AG04450 (cell line): ENCODE measurements at regions of chr20 and their contacts with region 1.

Region 1: DNA sequence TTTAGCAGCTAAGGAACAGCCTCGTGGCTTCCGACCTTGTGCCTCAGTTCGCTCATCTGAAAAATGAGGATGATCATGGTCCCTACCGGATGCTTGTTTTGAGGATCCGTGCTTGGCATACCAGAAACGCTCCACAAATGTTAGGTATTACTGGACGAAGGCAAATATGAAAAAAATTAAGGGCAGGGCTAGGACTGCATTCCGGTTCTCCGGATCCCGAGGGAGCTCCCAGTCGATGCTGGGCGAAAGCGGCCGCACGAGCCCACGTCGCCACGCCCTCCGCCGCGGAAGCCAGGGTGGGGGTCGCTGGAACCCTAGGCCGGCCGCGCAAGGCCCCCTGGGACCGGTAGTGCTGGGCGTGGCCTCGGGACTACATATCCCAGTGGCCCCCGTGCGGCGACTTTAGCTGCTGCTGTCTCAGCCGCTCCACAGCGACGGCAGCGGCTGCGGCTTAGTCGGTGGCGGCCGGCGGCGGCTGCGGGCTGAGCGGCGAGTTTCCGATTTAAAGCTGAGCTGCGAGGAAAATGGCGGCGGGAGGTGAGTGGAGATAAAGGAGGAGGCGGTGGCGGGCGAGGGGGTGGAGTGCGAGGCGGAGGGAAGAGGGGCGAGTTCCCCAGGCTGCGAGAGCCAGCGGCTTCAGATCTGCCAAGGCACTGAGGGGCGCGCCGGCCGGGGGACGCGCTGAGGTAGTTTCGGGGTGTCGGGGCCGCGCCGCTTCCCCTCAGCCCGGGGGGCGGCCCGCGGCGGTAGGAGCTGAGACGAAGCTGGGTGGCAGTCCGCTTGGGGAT is at the start of gene NCOA3:
- DNase-seq: peak; percentile 83
- H3K4me3 ChIP-seq: peak within 1 kb of the TSS; percentile 78
- H3K27ac ChIP-seq: peak within 1 kb of the TSS; percentile 55
- H3K27me3 ChIP-seq: no peaks in the 10 kb centered on the region
- CTCF ChIP-seq: peak; percentile 46
- polyA plus RNA-seq, gene NCOA3: 22.1 and 25.4 TPM in 2 replicates

Region 2: GRCh38 chr20:47120346-47120936 is 381.2 kb before region 1 on chr20:
- CTCF ChIA-PET with region 1: no interaction called
- POLR2A ChIA-PET with region 1: no interaction called
- DNase-seq: no peak
- H3K4me3 ChIP-seq: no peak overlapping the region
- H3K27ac ChIP-seq: no peak overlapping the region
- H3K27me3 ChIP-seq: no peaks in the 10 kb centered on the region
- CTCF ChIP-seq: no peak

Region 3: GRCh38 chr20:47453142-47453782 is 48.4 kb before region 1 on chr20:
- CTCF ChIA-PET with region 1: interaction called, 10 read pairs
- POLR2A ChIA-PET with region 1: interaction called, 3 read pairs
- DNase-seq: peak; percentile 68
- H3K4me3 ChIP-seq: no peak overlapping the region
- H3K27ac ChIP-seq: peak overlapping the region; percentile 39
- H3K27me3 ChIP-seq: no peaks in the 10 kb centered on the region
- CTCF ChIP-seq: no peak

Region 4: DNA sequence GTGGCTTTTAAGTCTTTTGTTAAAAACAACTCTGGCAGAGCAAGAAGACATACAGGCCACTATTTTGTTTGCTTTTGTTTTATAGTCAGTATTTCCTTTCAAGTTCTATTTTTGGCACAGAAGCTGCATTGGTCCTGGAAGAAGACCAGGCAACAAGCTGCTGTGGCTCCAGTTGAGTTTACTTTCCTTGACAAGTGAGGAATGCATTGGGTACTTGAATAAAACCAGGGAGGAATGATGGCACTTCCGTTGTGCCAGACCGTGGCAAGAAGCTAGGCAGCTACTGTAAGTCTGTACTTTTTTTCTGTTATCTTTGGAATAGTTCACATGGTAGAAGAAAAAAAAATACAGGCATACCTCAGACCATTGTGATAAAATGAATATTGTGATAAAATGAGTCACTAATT is 66.3 kb after region 1 on chr20:
- CTCF ChIA-PET with region 1: no interaction called
- POLR2A ChIA-PET with region 1: interaction called, 12 read pairs
- DNase-seq: peak; percentile 81
- H3K4me3 ChIP-seq: no peak overlapping the region
- H3K27ac ChIP-seq: peak overlapping the region; percentile 47
- H3K27me3 ChIP-seq: no peaks in the 10 kb centered on the region
- CTCF ChIP-seq: no peak

Region 5: DNA sequence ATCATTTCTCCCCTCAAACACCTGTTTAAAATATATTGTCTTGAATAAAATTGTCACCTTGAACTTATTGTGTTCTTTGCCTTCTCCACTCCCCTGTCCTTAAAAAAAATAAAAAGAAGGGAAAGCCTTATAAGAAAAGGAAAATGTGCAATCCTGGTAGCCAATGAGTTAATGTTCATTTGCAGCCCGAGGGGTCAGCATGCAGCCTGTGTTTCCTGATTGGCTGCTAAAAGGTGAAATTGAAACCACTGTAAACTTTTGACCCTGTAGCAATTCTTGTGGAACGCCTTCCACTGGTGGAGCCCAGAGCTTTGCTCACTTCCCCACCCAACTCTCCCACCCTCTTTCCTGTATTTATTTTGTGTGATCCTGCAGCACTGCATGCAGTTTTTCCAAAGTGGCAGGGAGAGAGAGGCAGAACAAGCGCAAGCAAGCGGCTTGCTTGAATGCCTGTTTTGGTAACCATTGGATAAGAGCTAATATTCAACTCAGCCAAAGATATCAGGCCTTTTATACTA is 74.9 kb after region 1 on chr20:
- CTCF ChIA-PET with region 1: no interaction called
- POLR2A ChIA-PET with region 1: interaction called, 15 read pairs
- DNase-seq: peak; percentile 65
- H3K4me3 ChIP-seq: peak overlapping the region; percentile 29
- H3K27ac ChIP-seq: no peak overlapping the region
- H3K27me3 ChIP-seq: no peaks in the 10 kb centered on the region
- CTCF ChIP-seq: no peak

Region 6: GRCh38 chr20:47809111-47809912 is 307.6 kb after region 1 on chr20:
- CTCF ChIA-PET with region 1: no interaction called
- POLR2A ChIA-PET with region 1: no interaction called
- DNase-seq: no peak
- H3K4me3 ChIP-seq: no peak overlapping the region
- H3K27ac ChIP-seq: no peak overlapping the region
- H3K27me3 ChIP-seq: no peaks in the 10 kb centered on the region
- CTCF ChIP-seq: no peak